ENCODE measurements at regions of chr2 and their contacts with region 1.

Region 1: GRCh38 chr2:141554810-141555209 is 576.0 kb downstream of the LRP1B start:
- DNase-seq: peak; percentile 15
- CTCF ChIP-seq: peak; percentile 83

Region 2: GRCh38 chr2:140586379-140586778 is 968.4 kb before region 1 on chr2:
- CTCF ChIA-PET with region 1: interaction called, 10 read pairs
- POLR2A ChIA-PET with region 1: no interaction called
- DNase-seq: peak; percentile 30
- CTCF ChIP-seq: peak; percentile 64

Region 3: GRCh38 chr2:141455184-141455826 is 99.5 kb before region 1 on chr2:
- CTCF ChIA-PET with region 1: no interaction called
- POLR2A ChIA-PET with region 1: no interaction called
- DNase-seq: no peak
- CTCF ChIP-seq: no peak

Region 4: GRCh38 chr2:141534666-141535362 is 20.0 kb before region 1 on chr2:
- CTCF ChIA-PET with region 1: interaction called, 11 read pairs
- POLR2A ChIA-PET with region 1: no interaction called
- DNase-seq: peak; percentile 6
- CTCF ChIP-seq: no peak

Region 5: DNA sequence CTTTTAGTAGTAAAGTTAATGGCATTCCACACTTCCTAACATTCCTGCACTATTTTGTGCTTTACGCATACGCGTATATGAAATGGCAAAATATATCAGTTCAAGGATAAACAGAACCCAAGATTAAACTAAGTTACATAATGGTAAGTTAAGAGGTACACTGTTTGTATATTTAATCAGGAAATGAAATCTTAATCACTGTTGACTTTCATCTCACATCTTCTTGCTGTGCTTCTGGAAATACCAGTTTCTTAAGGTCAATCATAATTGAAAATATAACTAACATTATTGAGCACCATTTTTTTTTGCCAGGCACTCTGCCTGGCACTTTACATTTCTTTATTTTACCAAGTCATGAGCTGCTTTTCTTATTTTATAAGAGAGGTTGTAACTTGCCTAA is 10.8 kb after region 1 on chr2:
- CTCF ChIA-PET with region 1: interaction called, 10 read pairs
- POLR2A ChIA-PET with region 1: no interaction called
- DNase-seq: no peak
- CTCF ChIP-seq: no peak

Region 6: GRCh38 chr2:141582213-141582612 is 27.4 kb after region 1 on chr2:
- CTCF ChIA-PET with region 1: no interaction called
- POLR2A ChIA-PET with region 1: no interaction called
- DNase-seq: no peak
- CTCF ChIP-seq: no peak

Measured in GM10248 (cell line).